Calu3 (cell line): ENCODE measurements at regions of chr1 and their contacts with region 1.

Region 1: GRCh38 chr1:211578640-211579433 is at the start of gene SLC30A1:
- DNase-seq: peak; percentile 99
- H3K4me3 Mint-ChIP-seq: peak within 1 kb of the TSS; percentile 95
- H3K27ac Mint-ChIP-seq: peak within 1 kb of the TSS; percentile 92
- H3K4me1 Mint-ChIP-seq: peaks cover 23% of the 10 kb centered on the region
- H3K27me3 Mint-ChIP-seq: no peaks in the 10 kb centered on the region
- CTCF ChIP-seq: no peak
- total RNA-seq, gene SLC30A1: 15.5 and 25.3 TPM in 2 replicates

Region 2: DNA sequence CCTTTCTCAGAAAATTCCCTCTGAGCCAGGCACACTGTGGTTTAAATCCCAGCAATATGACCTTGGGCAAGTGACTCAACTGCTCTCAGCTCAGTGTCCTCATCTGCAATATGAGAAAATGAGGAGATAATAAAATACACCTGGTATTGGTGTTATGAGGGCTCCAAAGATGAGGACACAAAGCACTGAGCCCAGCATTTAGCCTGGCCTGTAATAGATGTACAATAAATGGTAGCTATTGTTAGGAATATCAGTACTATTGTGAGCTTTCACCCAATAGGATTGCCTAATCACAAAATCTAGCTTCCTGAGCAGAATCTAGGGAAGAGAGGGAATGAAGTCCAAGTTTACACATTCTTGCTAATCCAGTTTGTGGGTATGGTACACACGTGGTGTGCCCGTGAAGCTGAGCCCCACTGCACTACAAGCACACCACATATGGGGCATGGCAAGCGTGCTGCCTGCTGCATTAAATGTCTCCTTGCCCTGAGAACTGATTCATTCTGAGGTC is 24.4 kb after region 1 on chr1:
- CTCF ChIA-PET with region 1: interaction called, 5 read pairs
- intact Hi-C with region 1: loop called (anchors 2 kb)
- DNase-seq: no peak
- H3K4me3 Mint-ChIP-seq: no peak overlapping the region
- H3K27ac Mint-ChIP-seq: no peak overlapping the region
- H3K4me1 Mint-ChIP-seq: peaks cover 31% of the 10 kb centered on the region
- H3K27me3 Mint-ChIP-seq: no peaks in the 10 kb centered on the region
- CTCF ChIP-seq: no peak

Region 3: GRCh38 chr1:211648980-211649934 is 70.4 kb after region 1 on chr1:
- CTCF ChIA-PET with region 1: interaction called, 12 read pairs
- intact Hi-C with region 1: no loop called
- DNase-seq: peak; percentile 87
- H3K4me3 Mint-ChIP-seq: no peak overlapping the region
- H3K27ac Mint-ChIP-seq: peak overlapping the region; percentile 55
- H3K4me1 Mint-ChIP-seq: peaks cover 46% of the 10 kb centered on the region
- H3K27me3 Mint-ChIP-seq: no peaks in the 10 kb centered on the region
- CTCF ChIP-seq: peak; percentile 74

Region 4: GRCh38 chr1:211654838-211655787 is 76.3 kb after region 1 on chr1:
- CTCF ChIA-PET with region 1: interaction called, 12 read pairs
- intact Hi-C with region 1: loop called (anchors 1 kb)
- DNase-seq: peak; percentile 93
- H3K4me3 Mint-ChIP-seq: no peak overlapping the region
- H3K27ac Mint-ChIP-seq: no peak overlapping the region
- H3K4me1 Mint-ChIP-seq: peaks cover 16% of the 10 kb centered on the region
- H3K27me3 Mint-ChIP-seq: no peaks in the 10 kb centered on the region
- CTCF ChIP-seq: peak; percentile 93